Right ventricle myocardium inferior (tissue), 1 donor: ENCODE measurements at regions of chr19 and their contacts with region 1.

Region 1: GRCh38 chr19:47745010-47745901 is at the start of gene NOP53:
- DNase-seq: peak; percentile 98
- ATAC-seq: peak; percentile 62
- total RNA-seq, gene NOP53: 172 TPM

Region 2: DNA sequence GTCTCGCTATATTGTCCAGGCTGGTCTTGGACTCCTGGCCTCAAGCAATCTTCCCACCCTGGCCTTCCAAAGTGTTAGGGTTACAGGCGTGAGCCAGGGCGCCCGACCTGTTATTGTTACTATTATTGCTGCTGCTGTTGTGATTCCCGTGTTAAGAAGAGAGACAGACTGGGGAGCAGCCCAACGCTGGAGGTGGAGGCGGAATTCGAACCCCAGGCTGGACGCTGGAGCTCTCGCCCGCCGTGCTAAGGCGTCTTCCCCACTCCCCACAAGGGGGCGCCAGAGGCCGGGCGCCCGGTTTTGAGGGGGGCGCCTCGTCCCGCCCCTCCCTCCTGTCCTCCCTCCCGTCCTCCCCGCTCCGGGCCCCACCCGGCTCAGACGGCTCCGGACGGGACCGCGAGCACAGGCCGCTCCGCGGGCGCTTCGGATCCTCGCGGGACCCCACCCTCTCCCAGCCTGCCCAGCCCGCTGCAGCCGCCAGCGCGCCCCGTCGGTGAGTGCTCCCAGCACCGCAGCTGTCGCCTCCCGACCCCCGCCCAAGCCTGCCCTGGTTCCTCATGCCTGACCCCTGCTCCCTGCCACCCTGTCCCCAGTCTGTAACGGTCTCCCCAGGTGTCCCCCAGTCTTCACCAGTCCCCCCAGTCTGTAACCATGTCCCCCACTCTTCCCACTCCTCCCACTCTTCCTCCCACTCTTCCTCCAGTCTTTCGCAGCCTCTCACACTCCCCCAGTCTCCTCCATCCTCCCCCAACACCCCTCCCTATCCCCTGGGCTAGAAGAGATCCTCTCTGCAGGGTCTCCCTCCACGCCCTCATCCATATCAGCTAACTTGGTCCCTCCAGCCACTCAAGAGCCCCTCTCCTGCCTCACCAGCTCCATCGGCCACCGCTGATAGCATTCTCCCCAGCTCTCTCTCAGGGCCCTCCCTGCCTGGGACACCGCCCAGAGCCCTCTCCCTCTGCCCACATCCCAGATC is 31.9 kb before region 1 on chr19 and contains the start of gene EHD2:
- intact Hi-C with region 1: loop called (anchors 1 kb)
- DNase-seq: peak; percentile 80
- ATAC-seq: peak; percentile 95
- total RNA-seq, gene EHD2: 60.5 TPM

Region 3: GRCh38 chr19:47729992-47730889 is 15.0 kb before region 1 on chr19:
- intact Hi-C with region 1: loop called (anchors 1 kb)
- DNase-seq: peak; percentile 84
- ATAC-seq: peak; percentile 73

Region 4: GRCh38 chr19:47765523-47766358 is 20.5 kb after region 1 on chr19:
- intact Hi-C with region 1: no loop called
- DNase-seq: peak; percentile 66
- ATAC-seq: peak; percentile 75

Region 5: DNA sequence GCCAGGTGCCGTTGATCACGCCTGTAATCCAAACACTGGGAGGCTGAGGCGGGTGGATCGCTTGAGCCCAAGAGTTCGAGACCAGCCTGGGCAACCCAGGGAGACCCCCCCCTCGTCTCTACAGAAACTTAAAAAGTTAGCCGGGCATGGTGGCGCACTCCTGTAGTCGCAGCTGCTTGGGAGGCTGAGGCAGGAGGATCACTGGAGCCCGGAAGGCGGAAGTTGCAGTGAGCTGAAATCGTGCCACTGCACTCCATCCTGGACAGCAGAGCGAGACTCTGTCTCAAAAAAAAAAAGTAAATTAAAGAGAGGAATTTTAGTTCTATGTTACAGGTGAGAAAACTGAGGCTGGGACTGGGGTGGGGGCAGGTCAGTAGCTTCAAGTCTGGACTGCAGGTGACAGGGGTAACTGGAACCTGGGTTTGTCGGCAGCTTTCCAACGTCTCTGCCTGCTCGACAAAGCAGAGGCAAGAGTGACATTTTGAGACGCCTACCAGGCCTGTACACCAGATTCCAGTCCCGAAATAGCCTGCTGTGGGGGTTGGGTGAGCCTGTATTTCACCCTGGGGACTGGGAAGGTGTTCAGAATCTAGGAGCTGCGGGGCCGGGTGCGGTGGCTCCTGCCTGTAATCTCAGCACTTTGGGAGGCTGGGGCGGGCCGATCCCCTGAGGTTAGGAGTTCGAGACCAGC is 34.4 kb after region 1 on chr19:
- intact Hi-C with region 1: loop called (anchors 5 kb)
- DNase-seq: no peak
- ATAC-seq: peak; percentile 73